HepG2 (cell line): ENCODE measurements at regions of chr9 and their contacts with region 1.

Region 1: GRCh38 chr9:131031642-131032005 is 22.6 kb downstream of the LAMC3 start:
- DNase-seq: no peak
- ATAC-seq: no peak
- H3K4me3 ChIP-seq: no peak overlapping the region
- H3K27ac ChIP-seq: no peak overlapping the region
- H3K4me1 ChIP-seq: no peaks in the 10 kb centered on the region
- H3K27me3 ChIP-seq: peaks cover 19 to 90% of the 10 kb centered on the region in 2 experiments; a peak in 4 of 5 replicates
- CTCF ChIP-seq: no peak
- EP300 ChIP-seq: no peak
- POLR2A ChIP-seq: no peak
- RAD21 ChIP-seq: no peak

Region 2: DNA sequence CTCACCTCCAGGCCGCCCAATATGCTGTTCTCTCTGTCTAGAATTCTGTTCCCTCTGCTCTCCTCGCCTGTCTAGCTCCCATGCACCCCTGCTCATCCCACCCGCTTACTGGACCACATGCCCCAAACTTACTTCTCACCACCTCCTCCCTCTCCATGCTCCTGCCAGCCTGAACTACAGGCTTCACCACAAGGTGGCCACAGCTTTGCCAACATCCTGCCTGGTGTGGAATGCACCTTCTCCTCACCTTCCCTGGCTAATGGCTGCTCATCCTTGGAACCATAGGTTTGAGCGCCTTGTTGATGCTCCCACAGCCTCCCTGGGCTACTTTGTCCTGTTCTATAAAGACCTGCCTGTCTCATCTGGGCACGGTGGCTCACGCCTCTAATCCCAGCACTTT is 13.0 kb before region 1 on chr9:
- CTCF ChIA-PET with region 1: no interaction called
- POLR2A ChIA-PET with region 1: no interaction called
- in situ Hi-C with region 1: no loop called
- intact Hi-C with region 1: loop called (anchors 1 kb)
- DNase-seq: peak; percentile 20
- ATAC-seq: peak; percentile 85
- H3K4me3 ChIP-seq: no peak overlapping the region
- H3K27ac ChIP-seq: no peak overlapping the region
- H3K4me1 ChIP-seq: no peaks in the 10 kb centered on the region
- H3K27me3 ChIP-seq: peaks cover 7 to 69% of the 10 kb centered on the region in 2 experiments
- CTCF ChIP-seq: peak; percentile 62
- EP300 ChIP-seq: no peak
- POLR2A ChIP-seq: no peak
- RAD21 ChIP-seq: no peak